Aorta (tissue), 5 donors: ENCODE measurements at regions of chr9 and their contacts with region 1.

Region 1: DNA sequence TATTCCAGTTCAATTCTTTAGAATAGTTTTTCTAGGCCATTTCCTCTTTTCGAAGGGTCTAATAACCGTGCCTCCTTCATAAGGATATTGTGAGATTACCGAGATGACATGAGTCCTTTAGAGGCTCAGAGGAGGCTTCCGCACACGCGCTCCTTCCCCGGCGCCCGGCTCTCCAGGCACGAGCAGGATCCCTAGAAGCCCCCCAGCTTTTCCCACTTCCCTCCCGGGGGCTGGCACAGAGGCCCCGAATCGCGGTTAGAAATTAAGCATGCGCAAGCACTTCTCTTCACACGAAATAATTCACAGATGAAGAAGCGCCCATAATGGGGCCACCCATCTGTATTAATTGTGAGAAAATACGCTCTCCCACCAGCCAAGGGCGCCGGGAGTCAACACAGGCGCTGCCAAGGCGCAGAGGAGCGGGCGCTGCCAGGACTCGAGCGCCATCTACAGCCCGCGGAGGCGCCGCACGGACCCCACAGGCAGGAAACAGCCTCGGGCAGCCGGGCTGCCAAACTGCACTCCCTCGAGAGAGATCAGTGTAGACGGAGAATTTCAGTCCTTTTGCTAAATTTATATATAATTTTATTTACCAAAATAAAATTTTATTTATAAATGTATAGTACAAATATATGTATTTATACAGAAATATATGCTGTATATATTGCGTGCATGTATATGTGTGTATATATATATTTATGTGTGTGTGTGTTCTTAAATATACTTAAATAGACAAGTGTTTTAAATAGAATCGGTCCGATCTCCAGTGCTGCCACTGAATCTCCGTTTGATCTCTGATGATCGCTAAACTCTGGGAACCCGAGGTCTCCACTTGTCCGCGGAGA is 258.1 kb upstream of the NFIL3 start:
- DNase-seq: peak; percentile 82 to 90
- ATAC-seq: peak; percentile 85
- H3K4me3 ChIP-seq: no peak overlapping the region
- H3K27ac ChIP-seq: no peak overlapping the region
- H3K4me1 ChIP-seq: no peaks in the 10 kb centered on the region
- H3K27me3 ChIP-seq: no peaks in the 10 kb centered on the region

Region 2: DNA sequence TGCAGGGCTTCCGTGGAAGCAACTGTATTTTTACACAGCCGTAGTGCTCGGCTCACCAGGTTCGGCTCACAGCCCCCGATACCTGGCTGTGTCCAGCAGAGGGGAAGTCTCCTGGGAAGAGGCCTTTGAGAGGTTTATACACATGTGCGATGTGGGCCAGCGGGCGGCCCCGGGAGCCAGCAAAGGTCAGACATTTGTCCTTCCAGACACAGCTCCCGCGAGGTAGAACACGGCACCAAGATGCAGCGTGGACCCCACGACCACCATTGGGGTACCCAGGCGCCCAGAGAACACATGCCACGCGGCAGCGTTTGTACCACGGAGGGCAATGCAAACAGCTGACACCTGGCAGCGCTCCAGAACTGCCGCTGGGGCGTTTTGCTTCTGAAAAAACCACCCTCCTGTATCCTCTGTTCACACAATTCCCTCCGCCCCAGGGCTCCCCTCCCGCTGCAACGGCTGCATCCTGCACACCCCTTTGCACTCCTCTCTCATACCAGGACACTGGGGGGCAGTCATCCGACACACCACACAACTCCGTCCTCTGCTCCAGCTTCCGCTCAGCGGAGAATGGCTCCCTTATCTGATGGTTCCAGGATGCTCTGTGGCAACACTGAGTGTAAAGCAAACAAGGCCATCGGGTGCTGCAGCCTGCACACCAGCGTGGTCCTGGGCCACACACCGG is 644.7 kb before region 1 on chr9:
- intact Hi-C with region 1: loop called in 1 of 2 experiments (anchors 2 kb)
- DNase-seq: peak; percentile 85 to 90
- ATAC-seq: peak; percentile 94
- H3K4me3 ChIP-seq: no peak overlapping the region
- H3K27ac ChIP-seq: no peak overlapping the region
- H3K4me1 ChIP-seq: no peaks in the 10 kb centered on the region
- H3K27me3 ChIP-seq: no peaks in the 10 kb centered on the region

Region 3: GRCh38 chr9:91572044-91572443 is 109.6 kb before region 1 on chr9:
- intact Hi-C with region 1: no loop called
- DNase-seq: no peak
- ATAC-seq: no peak
- H3K4me3 ChIP-seq: no peak overlapping the region
- H3K27ac ChIP-seq: no peak overlapping the region
- H3K4me1 ChIP-seq: no peaks in the 10 kb centered on the region
- H3K27me3 ChIP-seq: no peaks in the 10 kb centered on the region

Region 4: DNA sequence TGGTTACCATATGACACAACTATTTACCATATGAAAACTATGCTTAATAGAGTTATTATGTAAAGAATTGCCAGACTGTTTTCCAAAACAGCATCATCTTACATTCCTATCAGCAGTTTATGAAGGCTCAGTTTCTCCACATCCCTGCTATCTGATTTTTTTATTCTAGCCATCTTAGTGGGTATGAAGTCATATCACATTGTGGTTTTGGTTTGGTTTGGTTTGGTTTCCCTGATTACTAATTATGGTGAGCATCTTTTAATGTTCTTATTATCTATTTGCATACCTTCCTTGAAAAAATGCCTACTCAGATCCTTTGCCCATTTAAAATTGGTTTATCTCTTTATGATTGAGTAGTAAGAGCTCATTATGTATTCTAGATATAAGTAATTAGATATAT is 58.7 kb before region 1 on chr9:
- intact Hi-C with region 1: no loop called
- DNase-seq: no peak
- ATAC-seq: no peak
- H3K4me3 ChIP-seq: no peak overlapping the region
- H3K27ac ChIP-seq: no peak overlapping the region
- H3K4me1 ChIP-seq: no peaks in the 10 kb centered on the region
- H3K27me3 ChIP-seq: no peaks in the 10 kb centered on the region

Region 5: DNA sequence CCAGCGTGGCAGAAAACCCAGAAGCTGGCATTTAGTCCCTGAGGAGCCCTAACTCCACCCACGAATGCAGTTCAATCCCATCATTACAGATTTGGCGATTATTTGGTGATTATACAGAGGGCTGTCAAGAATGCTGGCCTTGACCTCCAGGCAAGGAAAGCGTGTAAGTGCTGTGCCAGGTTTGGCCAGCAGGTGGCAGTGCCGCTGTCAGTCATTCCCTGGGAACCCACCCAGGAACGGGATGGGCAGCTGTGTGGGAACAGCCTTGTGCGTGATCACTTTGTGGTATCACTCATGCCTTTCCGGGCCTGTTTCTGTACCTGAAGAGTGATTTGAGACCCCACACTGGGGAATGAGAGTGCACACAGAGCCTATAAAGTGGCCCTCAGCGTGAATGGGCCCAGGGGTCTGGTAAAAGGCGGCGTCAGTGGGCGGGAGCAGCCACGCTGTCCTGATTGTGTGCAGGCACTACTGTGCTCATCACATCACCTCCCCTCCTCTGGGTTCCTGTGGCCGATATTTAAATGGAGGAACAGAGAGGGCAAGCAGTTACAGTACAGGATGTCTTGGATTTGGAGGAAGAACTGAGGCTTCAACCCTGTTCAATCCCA is 52.8 kb after region 1 on chr9:
- intact Hi-C with region 1: no loop called
- DNase-seq: peak; percentile 64 to 90
- ATAC-seq: peak; percentile 78
- H3K4me3 ChIP-seq: no peak overlapping the region
- H3K27ac ChIP-seq: no peak overlapping the region
- H3K4me1 ChIP-seq: no peaks in the 10 kb centered on the region
- H3K27me3 ChIP-seq: no peaks in the 10 kb centered on the region

Region 6: DNA sequence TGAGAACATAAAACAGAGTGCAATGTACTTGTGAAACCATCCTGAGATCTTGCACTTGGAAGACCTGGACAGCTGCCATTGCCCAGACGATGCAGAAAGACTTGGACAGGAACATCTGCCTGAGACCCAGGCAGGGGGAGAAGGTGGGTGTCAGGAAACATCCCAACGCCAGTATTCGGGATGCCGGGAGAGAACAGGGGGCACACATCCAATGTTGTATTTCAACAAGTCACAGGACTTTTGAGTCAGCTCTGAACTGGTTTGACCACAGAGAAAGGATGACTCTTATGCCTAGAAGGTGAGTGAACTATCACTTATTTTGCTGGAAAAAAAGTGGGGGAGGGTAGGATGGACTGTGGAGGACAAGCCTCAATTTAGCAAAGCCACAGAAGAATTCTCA is 143.7 kb after region 1 on chr9:
- intact Hi-C with region 1: no loop called
- DNase-seq: no peak
- ATAC-seq: no peak
- H3K4me3 ChIP-seq: no peak overlapping the region
- H3K27ac ChIP-seq: no peak overlapping the region
- H3K4me1 ChIP-seq: no peaks in the 10 kb centered on the region
- H3K27me3 ChIP-seq: no peaks in the 10 kb centered on the region